ENCODE measurements at regions of chr6 and their contacts with region 1.

Region 1: GRCh38 chr6:16420715-16421461 is 182.5 kb downstream of the GMPR start:
- DNase-seq: peak; percentile 74
- H3K4me3 Mint-ChIP-seq: peak overlapping the region; percentile 62
- H3K27ac Mint-ChIP-seq: peak overlapping the region; percentile 96
- H3K4me1 Mint-ChIP-seq: peaks cover 69% of the 10 kb centered on the region
- H3K27me3 Mint-ChIP-seq: no peaks in the 10 kb centered on the region

Region 2: GRCh38 chr6:16319813-16320532 is 100.9 kb before region 1 on chr6:
- CTCF ChIA-PET with region 1: interaction called, 8 read pairs
- POLR2A ChIA-PET with region 1: interaction called, 6 read pairs
- intact Hi-C with region 1: loop called (anchors 1 kb)
- DNase-seq: peak; percentile 81
- H3K4me3 Mint-ChIP-seq: peak overlapping the region; percentile 50
- H3K27ac Mint-ChIP-seq: peak overlapping the region; percentile 84
- H3K4me1 Mint-ChIP-seq: peaks cover 82% of the 10 kb centered on the region
- H3K27me3 Mint-ChIP-seq: no peaks in the 10 kb centered on the region

Region 3: GRCh38 chr6:16397623-16398022 is 23.3 kb before region 1 on chr6:
- CTCF ChIA-PET with region 1: interaction called, 3 read pairs
- POLR2A ChIA-PET with region 1: no interaction called
- intact Hi-C with region 1: loop called (anchors 1 kb)
- DNase-seq: peak; percentile 27
- H3K4me3 Mint-ChIP-seq: no peak overlapping the region
- H3K27ac Mint-ChIP-seq: no peak overlapping the region
- H3K4me1 Mint-ChIP-seq: peaks cover 30% of the 10 kb centered on the region
- H3K27me3 Mint-ChIP-seq: no peaks in the 10 kb centered on the region

Region 4: GRCh38 chr6:16432075-16433032 is 11.5 kb after region 1 on chr6:
- CTCF ChIA-PET with region 1: interaction called, 5 read pairs
- POLR2A ChIA-PET with region 1: interaction called, 80 read pairs
- intact Hi-C with region 1: loop called (anchors 1 kb)
- DNase-seq: peak; percentile 58
- H3K4me3 Mint-ChIP-seq: no peak overlapping the region
- H3K27ac Mint-ChIP-seq: peak overlapping the region; percentile 100
- H3K4me1 Mint-ChIP-seq: peaks cover 66% of the 10 kb centered on the region
- H3K27me3 Mint-ChIP-seq: no peaks in the 10 kb centered on the region

Region 5: DNA sequence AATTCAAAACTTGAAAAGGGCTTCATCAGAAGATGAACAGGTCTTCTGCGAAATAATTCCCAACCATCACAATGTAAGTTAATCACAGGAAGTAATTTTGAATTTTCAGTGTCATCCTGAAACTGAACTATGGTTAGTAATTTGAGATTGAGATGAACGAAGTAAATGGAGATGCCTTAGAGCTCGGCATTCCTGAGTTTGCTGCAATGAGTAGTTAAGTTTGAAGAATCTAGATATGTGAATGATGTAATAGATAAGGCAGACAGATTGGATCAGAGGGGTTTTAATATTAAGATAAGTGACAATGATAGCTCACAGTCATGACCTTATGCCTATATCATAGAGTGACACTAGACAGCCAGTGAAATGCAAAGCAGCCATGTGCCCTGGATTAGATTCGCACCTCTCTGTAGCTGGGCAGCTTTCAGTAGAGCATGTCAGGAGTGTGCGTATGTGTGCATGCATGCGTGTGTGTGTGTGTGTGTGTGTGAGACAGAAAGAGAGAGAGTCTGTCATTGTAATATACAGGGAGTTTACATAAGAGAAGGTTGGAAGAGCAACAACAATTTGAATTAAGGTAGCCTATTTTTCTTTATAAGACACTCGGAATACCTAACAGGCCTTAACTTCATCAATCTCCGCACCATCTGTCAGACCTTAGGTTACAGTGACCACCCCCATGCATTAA is 50.5 kb after region 1 on chr6:
- CTCF ChIA-PET with region 1: interaction called, 7 read pairs
- POLR2A ChIA-PET with region 1: interaction called, 13 read pairs
- intact Hi-C with region 1: loop called (anchors 2 kb)
- DNase-seq: no peak
- H3K4me3 Mint-ChIP-seq: no peak overlapping the region
- H3K27ac Mint-ChIP-seq: peak overlapping the region; percentile 69
- H3K4me1 Mint-ChIP-seq: peaks cover 88% of the 10 kb centered on the region
- H3K27me3 Mint-ChIP-seq: no peaks in the 10 kb centered on the region

Region 6: DNA sequence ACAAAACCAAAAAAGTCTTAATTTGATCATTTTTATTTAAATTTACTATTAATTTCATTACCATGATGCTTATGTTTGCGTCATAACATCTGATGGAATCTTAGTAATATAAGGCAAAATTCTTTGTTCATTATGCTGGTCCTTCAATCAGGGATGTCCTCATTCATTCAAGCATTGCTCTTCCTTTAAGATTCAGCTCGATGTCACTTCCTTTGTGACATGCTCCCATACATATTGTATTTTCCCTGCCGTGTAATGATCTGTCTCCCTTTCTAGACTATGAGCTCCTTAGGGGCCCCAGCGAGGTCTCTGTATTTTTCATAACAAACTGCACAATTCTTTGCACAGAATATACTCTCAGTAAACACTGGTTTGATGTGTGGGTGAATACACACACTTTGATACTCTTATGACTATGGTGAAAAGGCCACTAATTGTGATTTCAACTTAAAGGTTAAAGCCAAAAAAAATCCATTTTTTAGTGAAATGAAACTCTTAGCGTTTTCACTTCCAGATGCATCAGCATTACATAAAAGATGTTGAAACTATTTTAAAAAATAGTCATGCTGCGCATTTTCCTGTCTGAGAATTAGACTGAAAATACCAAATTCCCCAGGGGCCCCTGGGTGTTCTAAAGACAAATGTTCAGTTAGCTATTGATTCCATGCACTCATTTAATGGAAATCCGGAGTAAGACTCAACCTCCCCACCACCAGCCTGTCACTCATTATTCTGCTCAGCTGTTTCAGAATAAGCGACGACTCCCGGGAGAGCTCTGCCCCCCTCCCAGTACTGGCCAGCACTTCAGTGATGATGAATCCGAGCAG is 170.7 kb after region 1 on chr6:
- CTCF ChIA-PET with region 1: no interaction called
- POLR2A ChIA-PET with region 1: no interaction called
- intact Hi-C with region 1: no loop called
- DNase-seq: peak; percentile 72
- H3K4me3 Mint-ChIP-seq: peak overlapping the region; percentile 39
- H3K27ac Mint-ChIP-seq: peak overlapping the region; percentile 78
- H3K4me1 Mint-ChIP-seq: peaks cover 43% of the 10 kb centered on the region
- H3K27me3 Mint-ChIP-seq: no peaks in the 10 kb centered on the region

Region 7: GRCh38 chr6:16690608-16691198 is 269.8 kb after region 1 on chr6:
- CTCF ChIA-PET with region 1: no interaction called
- POLR2A ChIA-PET with region 1: no interaction called
- intact Hi-C with region 1: loop called (anchors 2 kb)
- DNase-seq: peak; percentile 82
- H3K4me3 Mint-ChIP-seq: peak overlapping the region; percentile 51
- H3K27ac Mint-ChIP-seq: peak overlapping the region; percentile 90
- H3K4me1 Mint-ChIP-seq: peaks cover 93% of the 10 kb centered on the region
- H3K27me3 Mint-ChIP-seq: no peaks in the 10 kb centered on the region

Region 8: DNA sequence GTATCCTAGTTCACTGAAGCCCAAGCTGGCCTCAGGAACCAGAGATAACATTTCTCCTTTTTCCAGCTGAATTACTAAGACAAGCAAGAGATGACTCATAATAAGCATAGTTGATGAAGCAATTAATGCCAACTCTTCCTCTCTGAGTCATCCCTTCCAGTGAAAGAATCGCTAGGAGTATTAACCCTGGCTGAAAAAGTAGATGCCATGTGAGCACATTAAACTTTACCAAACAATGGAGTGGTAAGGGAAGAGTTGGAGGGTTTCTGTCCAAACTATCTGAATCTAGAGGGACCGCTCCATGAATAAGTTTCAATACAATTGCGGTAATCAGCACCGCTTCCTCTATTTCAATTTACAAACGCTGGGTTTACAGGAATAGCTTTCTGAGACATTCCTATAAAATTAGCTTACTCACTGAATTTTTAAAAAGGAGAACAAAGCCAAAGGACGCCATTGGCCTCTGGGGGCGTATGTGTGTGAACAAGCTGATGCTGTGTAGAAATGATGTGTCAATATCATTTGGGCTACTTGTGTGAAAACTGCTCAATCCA is 292.1 kb after region 1 on chr6:
- CTCF ChIA-PET with region 1: no interaction called
- POLR2A ChIA-PET with region 1: interaction called, 3 read pairs
- intact Hi-C with region 1: loop called (anchors 2 kb)
- DNase-seq: peak; percentile 62
- H3K4me3 Mint-ChIP-seq: peak overlapping the region; percentile 64
- H3K27ac Mint-ChIP-seq: peak overlapping the region; percentile 92
- H3K4me1 Mint-ChIP-seq: peaks cover 70% of the 10 kb centered on the region
- H3K27me3 Mint-ChIP-seq: no peaks in the 10 kb centered on the region

Region 9: DNA sequence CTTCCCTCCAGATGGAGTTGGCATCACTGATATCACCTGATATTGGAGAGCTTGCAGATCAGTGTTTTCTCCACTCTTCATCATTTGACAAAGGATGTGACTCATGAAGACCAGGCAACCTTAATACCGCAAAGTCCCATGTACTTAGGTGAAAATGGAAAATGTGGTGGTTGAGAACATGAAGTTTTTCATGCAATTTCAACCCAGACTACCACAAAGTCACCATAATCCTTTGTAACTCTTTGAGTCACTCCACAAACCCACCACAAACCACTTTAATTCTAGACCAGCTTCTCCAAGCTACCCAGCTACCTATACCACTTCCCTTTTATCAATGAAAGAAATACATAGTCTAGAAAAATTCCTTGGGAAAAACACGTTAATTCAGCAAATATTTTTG is 1694.5 kb after region 1 on chr6:
- CTCF ChIA-PET with region 1: no interaction called
- POLR2A ChIA-PET with region 1: no interaction called
- intact Hi-C with region 1: no loop called
- DNase-seq: peak; percentile 10
- H3K4me3 Mint-ChIP-seq: peak overlapping the region; percentile 35
- H3K27ac Mint-ChIP-seq: peak overlapping the region; percentile 38
- H3K4me1 Mint-ChIP-seq: peaks cover 10% of the 10 kb centered on the region
- H3K27me3 Mint-ChIP-seq: peaks cover 35% of the 10 kb centered on the region

Measured in activated CD4-positive, alpha-beta memory T cell treated with anti-CD3 and anti-CD28 coated beads for 36 hours (primary cell).